ENCODE measurements at regions of chr3 and their contacts with region 1.

Region 1: GRCh38 chr3:141454906-141455430 is 31.9 kb upstream of the RASA2 start:
- DNase-seq: no peak
- H3K4me3 ChIP-seq: no peak overlapping the region
- H3K27ac ChIP-seq: no peak overlapping the region
- H3K4me1 ChIP-seq: peaks cover 0 to 23% (median 0%) of the 10 kb centered on the region in 3 donors
- H3K27me3 ChIP-seq: peaks cover 0 to 37% (median 0%) of the 10 kb centered on the region in 4 donors
- CTCF ChIP-seq: peak; percentile 42 to 76 (median 66)
- POLR2A ChIP-seq: no peak

Region 2: DNA sequence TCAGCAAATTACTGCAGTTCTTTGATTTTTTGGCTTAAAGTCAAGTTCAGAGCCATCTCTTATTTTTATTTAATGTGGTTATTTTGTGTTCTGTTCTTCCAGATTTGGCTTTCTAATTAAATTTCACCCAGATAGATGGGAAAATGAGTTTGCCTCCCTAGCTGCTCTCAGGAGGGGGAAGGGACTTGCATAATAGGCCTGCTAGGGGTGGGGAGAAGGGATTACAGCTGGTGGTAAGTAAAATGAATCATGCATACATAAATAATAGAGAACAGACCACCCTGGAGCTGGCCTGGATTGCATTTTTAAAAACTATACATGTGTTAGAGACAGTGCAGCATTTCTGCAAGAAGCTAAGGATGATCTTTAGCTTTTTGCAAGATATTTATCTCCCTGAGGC is 227.2 kb before region 1 on chr3:
- intact Hi-C with region 1: no loop called
- DNase-seq: no peak
- H3K4me3 ChIP-seq: no peak overlapping the region
- H3K27ac ChIP-seq: no peak overlapping the region
- H3K4me1 ChIP-seq: peaks cover 0 to 23% (median 0%) of the 10 kb centered on the region in 3 donors
- H3K27me3 ChIP-seq: no peaks in the 10 kb centered on the region
- CTCF ChIP-seq: no peak
- POLR2A ChIP-seq: no peak

Region 3: DNA sequence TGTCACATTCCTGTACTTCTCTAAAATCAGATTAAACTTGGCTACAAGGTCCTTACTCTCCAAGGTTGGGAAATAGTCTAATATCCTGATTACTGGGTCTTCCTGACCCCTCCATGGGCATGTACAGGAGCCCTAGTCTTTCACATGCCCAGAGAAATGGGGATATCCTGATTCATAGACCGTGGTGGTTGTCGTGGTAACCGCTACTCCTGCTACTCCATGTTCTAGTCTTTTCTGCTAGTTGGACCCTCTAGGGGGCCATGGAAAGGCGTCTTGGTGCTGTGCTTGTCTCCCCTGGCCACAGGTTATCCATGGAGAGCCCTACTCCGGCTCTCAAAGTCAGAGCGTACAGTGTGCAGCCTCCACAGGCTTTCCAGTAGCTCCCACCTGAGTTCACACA is 99.7 kb before region 1 on chr3:
- intact Hi-C with region 1: loop called (anchors 5 kb)
- DNase-seq: no peak
- H3K4me3 ChIP-seq: no peak overlapping the region
- H3K27ac ChIP-seq: no peak overlapping the region
- H3K4me1 ChIP-seq: peaks cover 0 to 18% (median 4%) of the 10 kb centered on the region in 3 donors
- H3K27me3 ChIP-seq: peaks cover 0 to 90% (median 9%) of the 10 kb centered on the region in 4 donors
- CTCF ChIP-seq: no peak
- POLR2A ChIP-seq: no peak

Region 4: DNA sequence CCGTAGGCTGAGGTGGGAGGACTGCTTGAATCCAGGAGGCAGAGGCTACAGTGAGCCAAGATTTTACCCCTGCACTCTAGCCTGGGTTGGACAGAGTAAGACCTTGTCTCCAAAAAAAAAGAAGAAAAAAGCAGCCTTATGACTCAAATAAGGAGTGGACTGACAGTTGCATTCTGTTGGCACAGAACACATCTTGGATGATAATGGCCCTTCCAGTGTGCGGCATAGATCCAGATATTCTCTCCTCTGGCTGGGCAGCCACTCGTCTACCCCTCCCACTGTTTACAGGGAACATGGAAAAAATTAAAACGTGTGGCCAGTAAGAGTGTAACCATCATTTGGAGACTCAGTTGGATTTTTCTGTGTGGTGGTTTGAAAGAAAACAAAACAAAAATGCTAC is 164.5 kb after region 1 on chr3:
- intact Hi-C with region 1: no loop called
- DNase-seq: no peak
- H3K4me3 ChIP-seq: no peak overlapping the region
- H3K27ac ChIP-seq: no peak overlapping the region
- H3K4me1 ChIP-seq: no peaks in the 10 kb centered on the region
- H3K27me3 ChIP-seq: no peaks in the 10 kb centered on the region
- CTCF ChIP-seq: no peak
- POLR2A ChIP-seq: no peak

Measured in esophagus squamous epithelium (tissue), 5 donors.